ENCODE measurements at regions of chrX and their contacts with region 1.

Region 1: DNA sequence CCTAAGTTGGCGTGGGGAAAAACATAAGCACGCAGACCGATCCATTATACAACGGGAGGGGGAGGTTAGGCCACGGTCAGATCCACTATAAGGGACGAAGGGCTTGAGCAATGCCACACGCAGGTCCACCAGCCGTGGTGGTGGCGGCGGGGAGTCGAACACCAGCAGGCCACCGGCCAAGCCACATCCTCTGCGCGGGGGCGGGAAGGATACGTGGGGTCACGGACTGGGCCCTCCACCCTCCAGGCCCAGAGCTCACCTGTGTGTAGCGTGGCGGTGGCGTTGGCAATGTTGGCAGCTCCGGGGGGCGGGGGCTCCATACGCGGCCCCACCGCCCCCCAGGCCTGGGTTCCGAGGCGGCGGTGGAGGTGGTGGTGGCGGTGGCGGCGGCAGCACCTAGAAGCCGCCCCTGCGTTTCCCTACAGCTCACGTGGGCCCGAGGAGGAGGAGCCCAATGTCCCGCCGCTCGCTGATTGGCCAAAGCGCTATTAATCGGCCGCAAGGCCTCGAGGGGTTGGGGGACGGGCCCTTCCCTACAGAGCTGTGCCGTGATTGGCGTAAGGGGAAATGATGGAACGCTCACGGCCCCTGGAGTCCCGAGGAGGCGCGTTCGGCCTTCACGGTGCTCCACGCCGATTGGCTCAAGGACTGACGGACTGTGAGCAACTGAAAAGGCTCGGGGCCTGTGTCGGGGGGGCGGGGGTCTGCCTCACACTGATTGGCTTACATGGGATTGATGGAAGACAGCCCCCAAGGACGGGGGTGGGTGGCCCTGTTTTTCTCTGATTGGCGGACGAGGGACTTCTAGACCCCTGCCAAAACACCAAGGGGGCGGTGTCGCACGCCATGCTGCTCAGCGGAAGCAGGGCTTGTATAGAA is at the start of gene ELK1:
- DNase-seq: peak; percentile 94 to 97
- H3K4me3 ChIP-seq: peak within 1 kb of the TSS; percentile 63
- H3K4me3 Mint-ChIP-seq: peak within 1 kb of the TSS; percentile 89
- H3K27ac Mint-ChIP-seq: peak within 1 kb of the TSS; percentile 89
- H3K4me1 ChIP-seq: 0 out of 2 replicates have a peak, but pooled peaks cover 3% of the 10 kb centered on the region
- H3K4me1 Mint-ChIP-seq: peaks cover 23% of the 10 kb centered on the region
- H3K27me3 ChIP-seq: no peaks in the 10 kb centered on the region
- H3K27me3 Mint-ChIP-seq: no peaks in the 10 kb centered on the region
- CTCF ChIP-seq: peak in 1 of 2 experiments; percentile 1
- total RNA-seq, gene ELK1: 28.9 and 29.3 TPM in 2 replicates

Region 2: DNA sequence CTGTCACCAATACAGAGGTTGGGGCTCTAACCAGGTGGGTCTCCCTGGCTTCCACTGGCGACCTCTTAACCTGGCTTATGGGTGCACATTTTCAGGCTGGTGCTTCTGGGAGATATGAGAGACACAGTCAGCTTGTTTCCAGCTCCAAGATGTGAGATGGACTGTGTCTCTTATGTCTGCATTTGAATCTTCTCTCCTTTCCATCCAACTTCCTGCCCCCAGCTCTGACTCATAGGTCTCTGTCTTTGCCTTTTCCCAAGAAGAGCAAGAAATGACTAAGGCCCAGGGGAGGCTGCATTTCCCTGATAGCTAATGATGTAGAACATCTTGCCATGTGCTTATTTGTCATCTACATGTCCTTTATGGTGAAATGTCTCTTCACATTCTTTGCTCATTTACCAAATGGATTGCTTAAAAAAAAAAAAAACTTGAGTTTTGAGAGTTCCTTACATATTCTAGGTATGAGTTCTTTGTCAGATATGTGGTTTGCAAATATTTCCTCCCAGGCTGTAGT is 11.8 kb after region 1 on chrX:
- CTCF ChIA-PET with region 1: no interaction called
- POLR2A ChIA-PET with region 1: no interaction called
- intact Hi-C with region 1: no loop called
- DNase-seq: no peak
- H3K4me3 ChIP-seq: no peak overlapping the region
- H3K4me3 Mint-ChIP-seq: no peak overlapping the region
- H3K27ac Mint-ChIP-seq: peak overlapping the region; percentile 45
- H3K4me1 ChIP-seq: 0 out of 2 replicates have a peak, but pooled peaks cover 7% of the 10 kb centered on the region
- H3K4me1 Mint-ChIP-seq: peaks cover 7% of the 10 kb centered on the region
- H3K27me3 ChIP-seq: no peaks in the 10 kb centered on the region
- H3K27me3 Mint-ChIP-seq: no peaks in the 10 kb centered on the region
- CTCF ChIP-seq: no peak

Region 3: DNA sequence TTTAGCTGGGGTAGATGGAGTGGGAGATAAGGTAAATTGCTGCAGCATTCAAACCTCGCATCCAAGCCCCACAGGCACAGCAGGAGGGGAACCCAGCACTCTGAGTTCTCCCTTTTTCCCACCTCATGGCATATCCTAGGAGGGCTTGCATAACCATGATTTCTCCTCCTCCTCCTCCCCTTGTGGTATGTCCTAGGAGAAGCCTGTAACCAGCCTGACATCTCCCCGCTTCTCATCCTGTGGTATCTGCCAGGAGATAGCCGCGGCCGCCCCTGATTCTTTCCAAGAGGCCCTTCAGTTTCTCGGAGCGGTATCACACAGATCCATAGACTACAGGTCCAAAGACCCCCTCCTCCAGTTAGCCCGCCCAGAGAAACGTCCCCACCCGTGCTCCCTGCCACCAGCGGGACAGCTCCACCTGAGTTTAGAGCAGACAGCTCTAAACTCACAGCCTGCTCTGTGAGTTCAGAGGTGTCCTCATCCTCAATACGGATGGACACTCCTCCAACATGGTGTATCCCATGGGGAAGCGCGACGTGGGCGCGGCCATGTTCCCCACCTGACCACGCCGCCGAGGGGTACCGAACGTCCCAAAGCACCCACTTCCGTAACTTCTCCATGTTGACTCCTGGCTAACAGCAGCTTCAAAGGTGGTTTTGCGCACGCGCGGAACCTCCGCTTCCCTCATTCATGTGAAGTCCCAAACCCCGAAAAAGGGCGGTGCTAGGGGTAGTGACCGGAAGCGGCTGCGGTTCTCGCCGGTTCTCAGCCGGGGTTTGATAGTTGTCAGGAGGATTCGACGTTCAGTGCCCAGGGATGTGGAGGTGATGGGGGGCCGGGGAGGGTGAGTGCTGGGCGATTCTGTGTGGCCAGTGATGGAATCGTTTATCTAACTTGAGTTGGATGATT is 186.0 kb after region 1 on chrX and contains the start of gene ZNF81:
- CTCF ChIA-PET with region 1: no interaction called
- POLR2A ChIA-PET with region 1: no interaction called
- intact Hi-C with region 1: loop called (anchors 5 kb)
- DNase-seq: peak; percentile 94 to 96
- H3K4me3 ChIP-seq: peak within 1 kb of the TSS; percentile 44
- H3K4me3 Mint-ChIP-seq: peak within 1 kb of the TSS; percentile 100
- H3K27ac Mint-ChIP-seq: peak within 1 kb of the TSS; percentile 99
- H3K4me1 ChIP-seq: no peaks in the 10 kb centered on the region
- H3K4me1 Mint-ChIP-seq: peaks cover under 1% of the 10 kb centered on the region
- H3K27me3 ChIP-seq: no peaks in the 10 kb centered on the region
- H3K27me3 Mint-ChIP-seq: no peaks in the 10 kb centered on the region
- CTCF ChIP-seq: no peak
- total RNA-seq, gene ZNF81: 7.7 and 9.5 TPM in 2 replicates